ENCODE measurements at regions of chr3 and their contacts with region 1.

Region 1: GRCh38 chr3:52001443-52001974 is 5.8 kb upstream of the RPL29 start:
- H3K4me3 ChIP-seq: no peak overlapping the region
- H3K27ac ChIP-seq: no peak overlapping the region
- H3K4me1 ChIP-seq: no peaks in the 10 kb centered on the region
- CTCF ChIP-seq: peak; percentile 98

Region 2: GRCh38 chr3:51941798-51942602 is 59.5 kb before region 1 on chr3 and contains the starts of genes PARP3 and RRP9:
- CTCF ChIA-PET with region 1: interaction called, 13 read pairs
- POLR2A ChIA-PET with region 1: interaction called, 20 read pairs
- H3K4me3 ChIP-seq: peak within 1 kb of the TSS; percentile 70
- H3K27ac ChIP-seq: peak within 1 kb of the TSS; percentile 81
- H3K4me1 ChIP-seq: peaks cover 4% of the 10 kb centered on the region
- CTCF ChIP-seq: peak; percentile 98

Region 3: DNA sequence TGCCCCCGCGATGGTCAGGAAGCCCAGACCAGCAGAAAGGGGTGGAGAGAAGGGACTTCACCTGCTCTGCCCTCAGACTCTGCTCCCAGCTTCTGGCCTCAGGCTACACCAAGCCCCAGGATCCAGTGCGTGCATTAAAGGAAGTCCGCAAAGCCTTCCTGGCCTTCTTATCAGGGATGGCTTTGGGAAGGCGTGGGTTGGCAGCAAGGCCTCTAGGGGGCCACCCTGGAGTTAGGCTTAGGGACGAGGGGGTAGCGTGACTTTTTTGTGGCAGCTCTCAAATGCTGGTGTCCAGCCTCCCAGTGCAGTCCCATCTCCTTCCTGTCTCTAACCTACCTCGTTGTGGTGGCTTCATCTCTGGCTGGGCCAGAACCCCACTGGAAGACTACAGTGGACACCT is 13.1 kb after region 1 on chr3:
- CTCF ChIA-PET with region 1: interaction called, 14 read pairs
- POLR2A ChIA-PET with region 1: no interaction called
- H3K4me3 ChIP-seq: no peak overlapping the region
- H3K27ac ChIP-seq: no peak overlapping the region
- H3K4me1 ChIP-seq: no peaks in the 10 kb centered on the region
- CTCF ChIP-seq: no peak

Region 4: DNA sequence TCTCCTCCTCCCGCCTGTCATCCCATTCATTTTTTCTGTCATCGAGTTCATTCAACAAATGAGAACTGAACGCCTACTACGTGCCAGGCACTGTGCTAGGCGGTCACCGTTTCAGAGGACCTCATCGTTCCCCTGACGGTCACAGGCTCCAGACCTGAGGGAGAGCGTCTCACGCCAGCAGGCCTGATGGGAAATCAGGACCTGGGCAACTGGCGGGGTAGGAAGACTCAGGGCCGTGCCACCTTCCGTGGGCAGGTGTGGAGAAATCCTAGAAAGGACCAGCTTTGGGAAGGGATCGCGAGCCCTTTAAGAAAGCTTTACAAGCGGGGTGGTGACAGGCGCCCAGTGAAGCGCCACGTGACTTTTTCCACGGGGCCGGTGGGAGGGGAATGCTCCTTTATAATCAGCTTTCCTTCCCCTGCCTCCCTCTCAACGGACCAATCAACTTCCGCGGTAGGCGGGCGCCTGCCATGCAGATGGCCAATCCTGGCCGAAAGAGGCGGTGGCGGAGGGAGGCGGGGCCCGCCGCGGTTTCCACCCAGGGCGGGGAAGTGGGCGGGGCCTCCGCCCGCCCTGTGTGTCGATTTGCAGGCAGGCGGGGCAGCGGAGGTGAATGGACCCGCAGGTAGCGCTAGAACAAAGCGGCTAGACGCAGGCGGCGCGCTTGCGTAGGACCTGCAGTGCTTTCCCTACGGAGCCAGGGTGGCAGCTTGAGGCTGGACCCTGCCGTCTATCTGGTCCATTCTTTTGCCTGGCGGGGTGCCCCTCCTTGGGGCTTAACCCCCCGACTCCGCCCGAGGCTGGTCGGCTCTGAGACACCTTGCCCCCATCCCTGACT is 55.7 kb after region 1 on chr3:
- CTCF ChIA-PET with region 1: interaction called, 24 read pairs
- POLR2A ChIA-PET with region 1: interaction called, 4 read pairs
- H3K4me3 ChIP-seq: peak overlapping the region; percentile 58
- H3K27ac ChIP-seq: peak overlapping the region; percentile 18; the same call in 1 of the 2 replicates
- H3K4me1 ChIP-seq: peaks cover 4% of the 10 kb centered on the region; the same call in 1 of the 2 replicates
- CTCF ChIP-seq: no peak

Region 5: GRCh38 chr3:52123106-52123725 is 121.7 kb after region 1 on chr3:
- CTCF ChIA-PET with region 1: interaction called, 62 read pairs
- POLR2A ChIA-PET with region 1: no interaction called
- H3K4me3 ChIP-seq: no peak overlapping the region
- H3K27ac ChIP-seq: no peak overlapping the region
- H3K4me1 ChIP-seq: no peaks in the 10 kb centered on the region
- CTCF ChIP-seq: peak; percentile 86

Region 6: GRCh38 chr3:52144034-52144795 is 142.7 kb after region 1 on chr3:
- CTCF ChIA-PET with region 1: interaction called, 32 read pairs
- POLR2A ChIA-PET with region 1: no interaction called
- H3K4me3 ChIP-seq: no peak overlapping the region
- H3K27ac ChIP-seq: no peak overlapping the region
- H3K4me1 ChIP-seq: no peaks in the 10 kb centered on the region
- CTCF ChIP-seq: peak; percentile 72

Measured in HEK293 (cell line).